Mammary epithelial cell (primary cell): ENCODE measurements at regions of chr10 and their contacts with region 1.

Region 1: GRCh38 chr10:110746254-110746826 is 102.2 kb downstream of the RBM20 start:
- DNase-seq: peak; percentile 71
- H3K4me3 ChIP-seq: peak overlapping the region in 1 of 3 experiments; percentile 8
- H3K27ac ChIP-seq: no peak overlapping the region
- H3K4me1 ChIP-seq: peaks cover 8% of the 10 kb centered on the region
- H3K27me3 ChIP-seq: no peaks in the 10 kb centered on the region
- CTCF ChIP-seq: peak; percentile 80 to 85

Region 2: GRCh38 chr10:110304780-110305421 is 441.4 kb before region 1 on chr10 and contains the start of gene SMNDC1:
- CTCF ChIA-PET with region 1: no interaction called
- dilution Hi-C with region 1: no loop called
- in situ Hi-C with region 1: no loop called
- intact Hi-C with region 1: loop called (anchors 2 kb)
- DNase-seq: peak; percentile 96
- H3K4me3 ChIP-seq: peak within 1 kb of the TSS; percentile 69 to 97 (median 95)
- H3K27ac ChIP-seq: peak within 1 kb of the TSS; percentile 86
- H3K4me1 ChIP-seq: peaks cover 19% of the 10 kb centered on the region
- H3K27me3 ChIP-seq: no peaks in the 10 kb centered on the region
- CTCF ChIP-seq: no peak
- total RNA-seq, gene SMNDC1: 6.5 to 42.8 TPM

Region 3: GRCh38 chr10:110803830-110804338 is 57.5 kb after region 1 on chr10:
- CTCF ChIA-PET with region 1: interaction called, 3 read pairs
- dilution Hi-C with region 1: no loop called
- in situ Hi-C with region 1: no loop called
- intact Hi-C with region 1: loop called (anchors 1 kb)
- DNase-seq: peak; percentile 40
- H3K4me3 ChIP-seq: no peak overlapping the region
- H3K27ac ChIP-seq: no peak overlapping the region
- H3K4me1 ChIP-seq: peaks cover 14% of the 10 kb centered on the region
- H3K27me3 ChIP-seq: no peaks in the 10 kb centered on the region
- CTCF ChIP-seq: peak; percentile 40 to 69

Region 4: DNA sequence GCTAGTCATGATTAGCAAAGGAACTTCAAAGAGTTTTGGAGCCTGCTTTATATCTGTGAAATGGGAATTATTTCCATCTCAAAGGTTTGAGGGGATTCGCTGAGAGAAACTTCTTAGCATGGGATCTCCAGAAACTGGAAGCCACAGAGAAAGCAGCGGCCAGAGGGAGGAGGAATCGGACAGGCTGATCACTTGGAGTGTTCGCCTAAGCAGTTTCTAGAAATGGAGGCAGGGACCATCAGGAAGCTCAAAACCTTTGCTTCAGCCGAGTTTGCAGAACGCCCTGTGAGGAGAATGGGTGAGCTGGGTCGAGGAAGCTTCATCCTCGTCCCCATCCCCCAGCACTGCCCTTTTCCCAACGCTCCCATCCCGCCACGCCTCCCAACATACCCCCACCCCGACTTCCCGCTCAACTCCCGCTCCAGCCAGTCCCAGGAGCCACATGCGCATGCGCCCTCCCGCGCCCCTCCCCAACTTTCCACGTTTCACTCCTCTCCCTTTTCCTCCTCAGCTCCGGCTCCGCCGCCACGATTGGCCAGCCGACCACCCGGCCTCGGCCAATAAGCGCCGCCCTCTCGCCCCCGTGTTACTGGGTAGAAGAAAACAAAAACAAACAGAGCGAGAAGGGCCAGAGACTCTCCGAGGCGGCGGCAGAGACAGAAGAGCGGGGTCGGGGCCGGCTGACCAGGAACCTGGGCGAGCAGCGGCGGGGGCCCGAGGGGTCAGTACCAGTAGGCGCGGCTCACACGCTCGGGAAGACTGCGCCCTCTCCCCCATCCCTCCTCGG is 125.2 kb after region 1 on chr10 and contains the start of gene PDCD4:
- CTCF ChIA-PET with region 1: interaction called, 3 read pairs
- dilution Hi-C with region 1: no loop called
- in situ Hi-C with region 1: loop called in 1 of 2 experiments (anchors 10 kb)
- intact Hi-C with region 1: loop called (anchors 1 kb)
- DNase-seq: peak; percentile 96
- H3K4me3 ChIP-seq: peak within 1 kb of the TSS; percentile 85 to 93 (median 92)
- H3K27ac ChIP-seq: peak within 1 kb of the TSS; percentile 88
- H3K4me1 ChIP-seq: peaks cover 4% of the 10 kb centered on the region
- H3K27me3 ChIP-seq: no peaks in the 10 kb centered on the region
- CTCF ChIP-seq: no peak
- total RNA-seq, gene PDCD4: 123 to 133 TPM

Region 5: DNA sequence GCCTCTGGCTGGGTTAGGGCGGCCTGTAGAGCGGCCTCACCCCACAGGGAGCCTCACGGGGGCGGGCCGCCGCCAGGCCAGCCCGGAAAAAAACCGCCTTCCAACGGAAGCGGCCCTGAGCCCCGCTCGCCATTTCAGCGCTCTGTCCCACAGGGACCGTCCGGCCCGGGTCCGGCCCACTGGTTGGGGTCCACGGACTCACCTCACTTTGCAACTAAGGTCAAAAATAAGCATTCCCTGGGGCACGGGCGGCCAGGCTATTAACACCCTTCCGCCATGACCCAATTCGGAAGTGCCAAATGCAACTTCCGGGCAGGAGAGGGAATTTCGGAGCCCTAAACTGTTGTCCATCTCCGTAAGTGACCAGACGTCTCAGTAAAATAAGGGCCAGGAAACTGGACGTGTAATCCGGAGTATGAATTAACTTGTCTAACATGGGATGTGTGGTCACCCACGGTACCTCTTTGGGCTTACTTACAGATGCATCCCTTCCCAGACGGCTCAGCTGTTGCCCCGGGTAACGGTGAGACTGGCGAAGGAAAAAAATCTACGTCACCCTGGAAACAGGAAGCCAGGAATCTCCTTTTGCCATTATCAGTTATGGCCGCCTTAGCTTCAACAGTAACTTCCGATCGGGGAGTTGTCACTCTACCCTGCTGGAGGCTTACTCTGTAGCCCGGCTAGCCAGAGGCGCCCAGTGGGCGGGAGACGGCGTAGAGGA is 172.5 kb after region 1 on chr10 and contains the start of gene BBIP1:
- CTCF ChIA-PET with region 1: no interaction called
- dilution Hi-C with region 1: no loop called
- in situ Hi-C with region 1: no loop called
- intact Hi-C with region 1: loop called (anchors 1 kb)
- DNase-seq: peak; percentile 100
- H3K4me3 ChIP-seq: peak within 1 kb of the TSS; percentile 93 to 95 (median 94)
- H3K27ac ChIP-seq: peak within 1 kb of the TSS; percentile 97
- H3K4me1 ChIP-seq: peaks cover 5% of the 10 kb centered on the region
- H3K27me3 ChIP-seq: no peaks in the 10 kb centered on the region
- CTCF ChIP-seq: no peak
- total RNA-seq, gene BBIP1: 9.3 to 25.0 TPM

Region 6: GRCh38 chr10:111360260-111360925 is 614.1 kb after region 1 on chr10:
- CTCF ChIA-PET with region 1: no interaction called
- dilution Hi-C with region 1: no loop called
- in situ Hi-C with region 1: no loop called
- intact Hi-C with region 1: loop called (anchors 1 kb)
- DNase-seq: peak; percentile 19
- H3K4me3 ChIP-seq: no peak overlapping the region
- H3K27ac ChIP-seq: no peak overlapping the region
- H3K4me1 ChIP-seq: no peaks in the 10 kb centered on the region
- H3K27me3 ChIP-seq: no peaks in the 10 kb centered on the region
- CTCF ChIP-seq: peak; percentile 16 to 62